Cardiac septum (tissue), 1 donor: ENCODE measurements at regions of chr5 and their contacts with region 1.

Region 1: DNA sequence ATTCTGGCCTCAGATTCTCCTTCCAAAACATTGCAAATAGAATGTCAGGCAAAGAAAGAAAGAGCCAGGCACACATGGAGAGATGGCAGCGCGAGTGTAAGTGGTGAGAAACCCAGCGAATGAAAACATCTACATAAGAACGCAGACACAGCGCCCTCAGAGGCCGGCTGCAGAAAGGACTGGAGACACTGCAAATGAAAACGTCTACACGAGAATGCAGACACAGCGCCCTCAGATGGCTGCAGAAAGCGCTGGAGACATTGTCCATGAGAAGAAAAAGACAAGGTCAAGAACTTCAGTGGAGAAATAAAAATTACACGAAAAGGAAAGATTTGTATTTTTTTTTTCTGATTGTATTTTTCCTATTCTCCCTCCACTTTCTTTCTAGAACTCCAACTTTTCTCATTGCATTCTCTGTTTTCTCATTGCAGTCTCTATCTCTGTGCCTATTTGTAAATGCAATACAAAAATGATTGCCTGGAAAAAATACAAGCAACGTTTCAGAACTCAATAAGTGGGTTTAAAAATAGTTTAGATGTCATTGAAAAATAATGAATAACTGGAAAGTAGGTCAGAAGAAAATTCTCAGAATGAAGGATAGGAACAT is 117.9 kb upstream of the LPCAT1 start:
- DNase-seq: peak; percentile 78

Region 2: DNA sequence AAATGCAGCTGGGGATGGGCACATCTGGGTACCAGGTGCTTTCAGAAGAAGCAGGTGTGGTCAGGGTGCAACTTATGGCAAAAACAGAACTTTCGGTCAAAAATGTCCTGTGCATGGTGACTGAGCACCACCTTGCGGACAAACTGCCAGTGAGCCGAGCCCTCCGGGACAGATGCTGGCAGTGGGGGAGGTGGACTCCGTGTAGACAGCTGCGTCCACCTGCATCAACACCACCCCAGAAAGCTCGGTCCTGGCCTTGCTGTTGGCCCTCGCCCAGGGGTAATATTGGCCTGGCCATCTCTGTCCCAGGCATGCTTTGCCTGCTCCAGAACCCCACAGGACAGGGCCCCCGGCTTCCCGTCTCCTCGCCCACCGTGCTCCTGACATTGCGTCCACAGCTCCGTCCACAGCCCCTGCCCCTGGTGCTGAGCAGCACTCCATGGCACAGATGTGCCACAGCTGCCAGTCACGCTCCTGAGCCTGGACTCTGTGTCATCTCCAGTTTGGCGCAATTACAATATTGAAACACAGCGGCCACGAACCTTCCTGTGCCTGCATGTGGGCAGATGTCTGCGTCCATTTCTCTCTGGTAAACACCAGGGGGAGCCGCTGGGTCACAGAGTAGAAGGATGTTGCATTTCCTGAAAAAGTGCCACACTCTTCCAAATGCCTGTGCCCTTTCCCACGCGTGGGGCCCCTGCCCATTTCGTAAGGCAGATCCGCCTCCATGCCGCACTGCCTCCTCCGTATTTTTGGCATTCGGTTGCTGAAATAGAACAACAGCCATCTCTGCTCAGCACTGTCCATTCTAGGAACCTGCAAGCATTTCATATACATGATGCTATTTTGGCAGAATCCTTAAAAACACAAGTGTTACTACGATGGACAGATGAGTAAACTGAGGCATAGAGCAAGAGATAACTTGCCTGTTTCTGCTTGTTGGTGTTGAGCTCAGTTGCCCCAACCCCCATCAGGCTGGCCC is 473.6 kb before region 1 on chr5:
- intact Hi-C with region 1: loop called (anchors 2 kb)
- DNase-seq: no peak

Region 3: DNA sequence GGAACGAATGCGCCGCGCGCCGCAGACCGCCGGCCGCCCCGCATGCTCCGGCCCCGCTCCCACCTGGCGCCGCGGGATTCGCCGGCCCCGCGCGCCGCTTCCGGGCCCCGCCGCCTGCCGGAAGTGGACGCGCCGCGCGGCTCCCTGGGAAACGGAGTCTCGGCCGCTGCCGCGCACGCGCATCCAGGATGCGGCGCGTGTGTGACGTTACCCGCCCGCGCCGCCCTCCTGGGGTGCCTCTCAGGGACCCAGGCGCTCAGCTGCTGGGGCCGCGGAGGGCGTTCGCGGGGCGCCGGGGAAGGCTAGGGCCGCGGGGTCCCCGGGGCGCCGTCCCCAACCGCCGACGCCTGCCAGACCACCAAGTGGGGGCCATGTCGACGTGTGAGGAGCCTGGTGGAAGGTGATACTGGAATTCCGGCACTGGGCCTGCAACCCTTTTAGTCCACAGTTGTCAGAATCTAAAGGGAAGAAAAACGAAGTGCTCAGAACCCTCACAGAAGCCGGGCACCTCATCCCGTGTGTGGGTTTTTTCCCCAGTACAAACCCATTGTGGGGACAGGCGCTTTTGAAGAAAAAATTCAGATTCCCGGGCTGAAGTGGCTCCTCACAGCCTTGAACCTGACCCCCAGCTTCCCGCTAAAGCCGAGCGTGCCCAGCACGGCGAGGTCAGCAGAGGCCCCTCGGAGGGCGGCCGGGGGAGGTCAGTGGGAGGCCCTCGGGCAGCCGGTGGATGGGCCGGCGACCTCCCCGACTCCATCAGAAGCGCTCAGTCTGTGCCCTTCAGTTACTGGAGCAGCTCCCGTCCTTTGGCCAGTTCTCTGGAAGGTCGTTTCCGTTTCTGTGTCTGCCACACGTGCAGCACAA is 296.5 kb before region 1 on chr5 and contains the start of gene CLPTM1L:
- intact Hi-C with region 1: loop called (anchors 10 kb)
- DNase-seq: peak; percentile 91
- total RNA-seq, gene CLPTM1L: 42.6 TPM

Region 4: DNA sequence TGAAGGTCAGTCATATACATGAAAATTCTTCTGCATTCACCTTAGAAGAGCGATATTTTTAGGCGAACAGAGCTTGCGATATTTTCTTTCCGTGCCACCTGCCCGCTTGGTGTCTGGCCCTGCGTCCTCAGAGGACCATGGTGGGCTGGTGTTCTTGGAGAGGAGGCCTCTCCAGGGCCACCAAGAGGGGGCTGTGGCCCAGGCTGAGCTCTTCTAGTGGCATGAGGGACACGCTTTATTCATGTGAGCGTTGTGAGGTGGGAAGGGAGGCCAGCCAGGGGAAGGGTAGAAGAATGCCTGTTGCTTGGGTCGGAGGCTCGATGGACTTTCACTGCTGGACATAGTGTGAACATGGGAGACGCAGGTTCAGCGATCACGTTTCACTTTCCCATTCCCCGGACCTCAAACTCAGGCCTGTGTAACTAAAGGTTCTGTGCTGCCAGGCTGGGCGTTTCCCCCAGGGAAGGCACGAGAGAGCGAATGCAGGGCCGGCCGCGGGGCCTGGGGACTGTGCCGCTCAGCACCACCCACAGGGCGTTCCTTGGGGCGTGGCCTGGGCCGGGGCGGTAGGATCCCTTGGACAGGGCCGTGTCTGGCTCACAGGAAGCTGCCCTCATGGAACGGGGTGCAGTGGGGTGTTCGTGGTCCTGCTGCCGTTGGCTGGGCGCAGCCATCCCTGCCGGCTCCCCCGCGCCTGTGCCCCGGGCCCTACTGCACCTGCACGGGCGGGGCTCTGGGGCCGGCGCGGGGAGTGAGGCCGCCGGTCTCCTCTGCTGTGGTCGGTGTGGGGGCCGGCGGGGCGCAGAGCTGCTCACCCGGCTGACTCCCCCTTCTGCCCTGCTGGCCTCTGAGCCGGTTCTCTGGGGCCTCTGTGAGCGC is 256.0 kb before region 1 on chr5:
- intact Hi-C with region 1: loop called (anchors 10 kb)
- DNase-seq: peak; percentile 93

Region 5: GRCh38 chr5:1824109-1824821 is 182.6 kb after region 1 on chr5:
- intact Hi-C with region 1: no loop called
- DNase-seq: peak; percentile 55